ENCODE measurements at regions of chr1 and their contacts with region 1.

Region 1: GRCh38 chr1:112172294-112172882 is 182.9 kb upstream of the KCND3 start:
- DNase-seq: no peak
- H3K4me3 ChIP-seq: no peak overlapping the region
- H3K27ac ChIP-seq: no peak overlapping the region
- H3K27me3 ChIP-seq: peaks cover 0 to 4% (median 0%) of the 10 kb centered on the region in 45 donors
- CTCF ChIP-seq: no peak

Region 2: DNA sequence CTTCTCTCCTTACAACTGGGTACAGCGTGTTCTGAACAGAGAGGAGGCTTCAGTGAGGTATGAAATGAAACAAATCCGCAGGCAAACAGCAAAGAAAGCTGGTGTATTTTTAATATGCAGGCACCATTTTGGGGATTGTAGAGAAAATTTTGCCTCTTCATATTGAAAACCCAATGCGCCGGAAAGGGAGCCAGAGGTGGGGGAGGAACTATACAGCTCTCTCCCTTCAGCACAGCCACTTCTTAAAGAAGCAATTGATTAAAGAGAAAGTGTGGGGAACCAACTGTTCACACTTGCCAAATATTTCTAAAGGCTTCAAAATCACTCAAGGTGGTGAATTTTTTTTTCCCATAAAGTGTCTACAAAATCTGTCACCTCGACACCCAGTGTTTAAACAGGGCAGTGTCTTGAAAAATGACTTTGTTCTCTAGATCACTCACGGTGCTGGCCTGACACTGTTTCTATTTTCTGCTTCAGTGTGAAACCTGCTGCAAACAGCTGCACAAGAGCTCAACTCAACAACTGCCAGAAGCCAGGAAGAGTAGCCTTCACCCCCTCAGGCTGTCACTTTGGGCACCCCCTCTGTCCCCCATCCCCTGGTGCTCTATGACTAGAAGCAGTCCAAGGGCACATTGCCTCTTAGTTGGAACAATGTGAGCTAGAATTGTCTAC is 99.8 kb after region 1 on chr1:
- intact Hi-C with region 1: loop called in 1 of 2 experiments (anchors 2 kb)
- DNase-seq: peak in 3 of 10 donors; percentile 43 to 62 (median 53)
- H3K4me3 ChIP-seq: no peak overlapping the region
- H3K27ac ChIP-seq: peak overlapping the region in 55 of 59 donors; percentile 8 to 89 (median 72)
- H3K27me3 ChIP-seq: no peaks in the 10 kb centered on the region
- CTCF ChIP-seq: no peak

Measured in dorsolateral prefrontal cortex (tissue), 120 donors.